ENCODE measurements at regions of chr6 and their contacts with region 1.

Region 1: DNA sequence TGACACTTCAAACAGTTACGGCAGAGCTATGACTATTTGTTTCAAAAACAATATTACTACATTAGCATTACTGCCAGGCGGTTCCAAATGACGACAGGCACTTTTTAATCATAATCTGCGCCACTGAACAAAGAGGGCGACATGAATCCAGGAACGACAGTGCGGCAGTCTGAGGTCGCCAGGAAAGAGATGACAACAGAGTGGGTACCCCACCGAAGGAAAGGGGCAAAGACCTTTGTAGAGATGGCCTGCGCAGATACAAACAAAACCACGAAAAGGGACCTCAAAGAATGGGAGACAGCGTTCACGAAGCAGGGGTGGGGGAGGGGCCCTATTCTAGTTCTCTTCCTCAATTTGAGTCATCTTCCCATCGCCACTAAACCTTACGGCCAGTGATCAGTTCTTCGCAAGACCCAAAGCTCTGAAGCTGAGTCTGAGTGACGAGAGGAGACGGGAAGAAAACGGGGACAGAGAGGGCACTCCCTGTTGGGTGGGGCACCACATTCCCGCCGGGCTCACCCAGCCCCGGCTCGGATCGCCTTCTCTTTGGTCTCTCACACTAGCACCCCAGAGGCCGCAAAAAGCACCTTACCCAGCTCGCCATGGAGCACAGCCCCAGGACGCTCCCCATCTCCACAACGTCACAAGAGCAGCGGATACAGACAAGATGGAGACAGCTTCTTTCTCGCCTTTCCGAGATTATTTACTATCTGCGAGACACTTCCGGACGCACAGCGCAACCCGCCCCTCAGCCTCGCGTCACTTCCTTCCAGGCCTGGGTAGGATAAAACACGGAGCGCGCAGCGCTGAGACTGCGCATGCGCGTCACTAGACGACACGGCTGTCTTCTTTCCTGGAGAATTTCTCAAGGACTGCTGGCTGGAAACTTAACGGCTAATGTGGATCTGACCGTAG is at the start of gene SERINC1:
- DNase-seq: peak; percentile 88 to 98 (median 91)
- ATAC-seq: peak; percentile 95
- H3K4me3 ChIP-seq: peak within 1 kb of the TSS; percentile 95
- H3K4me3 Mint-ChIP-seq: peak within 1 kb of the TSS; percentile 99
- H3K27ac ChIP-seq: peak within 1 kb of the TSS; percentile 99 to 100
- H3K27ac Mint-ChIP-seq: peak within 1 kb of the TSS; percentile 100
- H3K4me1 ChIP-seq: peaks cover 27% of the 10 kb centered on the region
- H3K4me1 Mint-ChIP-seq: peaks cover 56% of the 10 kb centered on the region
- H3K27me3 ChIP-seq: no peaks in the 10 kb centered on the region
- H3K27me3 Mint-ChIP-seq: no peaks in the 10 kb centered on the region
- CTCF ChIP-seq: no peak
- total RNA-seq, gene SERINC1: 175 to 178 TPM

Region 2: DNA sequence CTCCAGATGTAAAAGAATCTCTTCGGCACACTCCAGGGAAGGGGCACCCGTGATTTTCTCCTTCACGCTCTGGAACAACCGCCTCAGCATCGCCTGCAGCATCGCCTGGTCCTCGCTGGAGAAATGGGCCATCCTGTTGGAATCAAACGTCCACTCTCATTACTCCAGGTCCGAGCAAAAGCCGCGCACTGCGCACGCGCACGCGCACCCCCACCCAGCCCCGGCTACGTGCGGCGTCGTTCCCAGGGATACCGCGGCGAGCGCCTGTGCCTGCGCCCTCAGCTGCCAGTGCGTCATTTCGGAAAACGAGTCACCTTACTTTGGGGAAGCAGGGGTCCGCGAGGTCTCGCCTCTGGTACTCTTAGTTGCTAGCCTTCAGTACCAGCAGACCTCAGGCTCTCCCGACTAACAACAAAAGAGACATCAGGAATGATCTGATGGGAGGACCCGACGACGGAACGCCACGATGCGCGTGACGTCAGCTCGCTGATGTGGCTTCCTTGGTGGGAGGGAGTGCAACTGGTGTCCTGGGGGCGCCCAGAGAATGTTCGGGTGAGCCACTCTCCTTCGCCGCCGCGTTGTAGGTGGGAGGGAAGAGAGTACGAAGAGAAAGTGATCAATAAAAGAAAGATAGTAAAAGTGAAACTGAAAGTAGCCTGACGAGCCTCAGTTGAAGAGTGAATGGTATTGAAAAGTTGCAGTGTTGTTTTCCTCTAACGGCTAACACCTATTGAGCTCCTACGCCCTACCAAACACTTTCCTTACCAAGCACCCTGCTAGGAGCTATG is 1136.9 kb before region 1 on chr6 and contains the start of gene TBC1D32:
- CTCF ChIA-PET with region 1: no interaction called
- POLR2A ChIA-PET with region 1: no interaction called
- intact Hi-C with region 1: loop called in 1 of 2 experiments (anchors 10 kb)
- DNase-seq: peak; percentile 73 to 92 (median 82)
- ATAC-seq: peak; percentile 84
- H3K4me3 ChIP-seq: peak within 1 kb of the TSS; percentile 83
- H3K4me3 Mint-ChIP-seq: peak within 1 kb of the TSS; percentile 97
- H3K27ac ChIP-seq: peak within 1 kb of the TSS; percentile 94 to 99
- H3K27ac Mint-ChIP-seq: peak within 1 kb of the TSS; percentile 98
- H3K4me1 ChIP-seq: peaks cover 15% of the 10 kb centered on the region
- H3K4me1 Mint-ChIP-seq: peaks cover 44% of the 10 kb centered on the region
- H3K27me3 ChIP-seq: no peaks in the 10 kb centered on the region
- H3K27me3 Mint-ChIP-seq: no peaks in the 10 kb centered on the region
- CTCF ChIP-seq: no peak
- total RNA-seq, gene TBC1D32: 9.4 to 9.8 TPM

Region 3: DNA sequence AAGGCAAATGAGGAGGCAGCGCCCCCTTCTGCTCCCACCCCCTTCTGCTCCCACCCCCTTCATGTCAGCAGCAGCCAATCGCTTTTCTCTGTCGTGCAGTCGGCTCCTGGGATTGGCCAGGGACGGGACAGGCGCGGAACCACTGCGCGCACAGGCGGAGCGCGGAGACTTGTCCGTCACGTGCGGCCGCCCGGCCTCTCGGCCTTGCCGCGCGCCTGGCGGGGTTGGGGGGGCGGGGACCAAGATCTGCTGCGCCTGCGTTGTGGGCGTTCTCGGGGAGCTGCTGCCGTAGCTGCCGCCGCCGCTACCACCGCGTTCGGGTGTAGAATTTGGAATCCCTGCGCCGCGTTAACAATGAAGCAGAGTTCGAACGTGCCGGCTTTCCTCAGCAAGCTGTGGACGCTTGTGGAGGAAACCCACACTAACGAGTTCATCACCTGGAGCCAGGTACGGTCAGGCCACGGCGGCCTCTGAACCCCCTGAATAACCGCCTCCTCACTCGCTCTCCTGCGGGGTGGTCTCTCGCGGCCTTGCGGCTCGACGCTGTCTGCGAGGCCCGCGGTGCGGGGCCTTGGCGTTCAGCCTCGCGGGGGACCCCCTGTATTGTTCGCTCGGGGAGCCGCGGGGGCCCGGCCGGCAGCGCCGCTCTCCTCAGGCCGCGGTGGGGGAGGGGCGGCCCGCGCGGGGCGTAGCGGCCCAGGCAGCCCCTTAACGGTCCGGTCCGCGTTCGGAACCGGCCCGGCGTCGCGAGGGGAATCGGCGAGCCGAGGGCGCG is 71.8 kb before region 1 on chr6 and contains the start of gene HSF2:
- CTCF ChIA-PET with region 1: interaction called, 8 read pairs
- POLR2A ChIA-PET with region 1: interaction called, 26 read pairs
- intact Hi-C with region 1: loop called (anchors 1 to 2 kb)
- DNase-seq: peak; percentile 86 to 98 (median 91)
- ATAC-seq: peak; percentile 94
- H3K4me3 ChIP-seq: peak within 1 kb of the TSS; percentile 94
- H3K4me3 Mint-ChIP-seq: peak within 1 kb of the TSS; percentile 100
- H3K27ac ChIP-seq: peak within 1 kb of the TSS; percentile 70 to 89
- H3K27ac Mint-ChIP-seq: peak within 1 kb of the TSS; percentile 86
- H3K4me1 ChIP-seq: peaks cover 12% of the 10 kb centered on the region
- H3K4me1 Mint-ChIP-seq: peaks cover 42% of the 10 kb centered on the region
- H3K27me3 ChIP-seq: no peaks in the 10 kb centered on the region
- H3K27me3 Mint-ChIP-seq: no peaks in the 10 kb centered on the region
- CTCF ChIP-seq: peak; percentile 24
- total RNA-seq, gene HSF2: 41.8 to 47.6 TPM

Region 4: GRCh38 chr6:122454673-122455072 is 16.7 kb before region 1 on chr6:
- CTCF ChIA-PET with region 1: no interaction called
- POLR2A ChIA-PET with region 1: interaction called, 15 read pairs
- intact Hi-C with region 1: no loop called
- DNase-seq: no peak
- ATAC-seq: no peak
- H3K4me3 ChIP-seq: no peak overlapping the region
- H3K4me3 Mint-ChIP-seq: no peak overlapping the region
- H3K27ac ChIP-seq: no peak overlapping the region
- H3K27ac Mint-ChIP-seq: peak overlapping the region; percentile 32
- H3K4me1 ChIP-seq: peaks cover 3% of the 10 kb centered on the region
- H3K4me1 Mint-ChIP-seq: peaks cover 70% of the 10 kb centered on the region
- H3K27me3 ChIP-seq: no peaks in the 10 kb centered on the region
- H3K27me3 Mint-ChIP-seq: no peaks in the 10 kb centered on the region
- CTCF ChIP-seq: no peak

Region 5: DNA sequence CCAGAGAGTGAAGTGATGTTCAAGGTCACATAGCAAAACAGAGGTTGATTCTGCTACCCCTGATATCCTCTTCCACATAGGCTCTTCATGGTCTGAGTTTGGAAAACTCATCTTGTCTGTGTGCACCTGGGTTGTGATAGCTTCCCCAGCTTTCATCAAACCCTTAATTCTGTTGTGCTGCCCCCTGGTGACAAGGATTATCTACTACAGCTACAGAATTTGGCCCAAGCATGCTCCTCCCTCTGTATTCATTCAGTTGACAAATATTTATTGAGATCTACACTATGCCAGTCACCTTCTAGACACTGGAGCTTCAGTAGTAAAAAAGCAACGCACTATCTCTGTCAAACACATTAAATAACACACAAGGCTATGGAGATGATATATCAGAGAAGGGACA is 368.1 kb after region 1 on chr6:
- CTCF ChIA-PET with region 1: no interaction called
- POLR2A ChIA-PET with region 1: no interaction called
- intact Hi-C with region 1: loop called (anchors 2 to 5 kb)
- DNase-seq: peak in 12 of 14 experiments; percentile 1 to 63 (median 16)
- ATAC-seq: peak; percentile 60
- H3K4me3 ChIP-seq: no peak overlapping the region
- H3K4me3 Mint-ChIP-seq: no peak overlapping the region
- H3K27ac ChIP-seq: no peak overlapping the region
- H3K27ac Mint-ChIP-seq: no peak overlapping the region
- H3K4me1 ChIP-seq: no peaks in the 10 kb centered on the region
- H3K4me1 Mint-ChIP-seq: no peaks in the 10 kb centered on the region
- H3K27me3 ChIP-seq: no peaks in the 10 kb centered on the region
- H3K27me3 Mint-ChIP-seq: peaks cover 14% of the 10 kb centered on the region
- CTCF ChIP-seq: peak; percentile 39

Measured in CD4-positive, alpha-beta T cell (primary cell).